GM23248 (cell line): ENCODE measurements at regions of chr3 and their contacts with region 1.

Region 1: GRCh38 chr3:74630602-74631001 is 16.1 kb upstream of the CNTN3 start:
- DNase-seq: peak; percentile 65
- H3K4me3 ChIP-seq: peak overlapping the region; percentile 47
- H3K27ac ChIP-seq: peak overlapping the region; percentile 69
- H3K4me1 ChIP-seq: peaks cover 39% of the 10 kb centered on the region
- H3K27me3 ChIP-seq: no peaks in the 10 kb centered on the region

Region 2: GRCh38 chr3:73868688-73869315 is 761.8 kb before region 1 on chr3:
- in situ Hi-C with region 1: loop called (anchors 25 kb)
- DNase-seq: peak; percentile 67
- H3K4me3 ChIP-seq: no peak overlapping the region
- H3K27ac ChIP-seq: no peak overlapping the region
- H3K4me1 ChIP-seq: peaks cover 12% of the 10 kb centered on the region
- H3K27me3 ChIP-seq: 0 out of 2 replicates have a peak, but pooled peaks cover 6% of the 10 kb centered on the region

Region 3: DNA sequence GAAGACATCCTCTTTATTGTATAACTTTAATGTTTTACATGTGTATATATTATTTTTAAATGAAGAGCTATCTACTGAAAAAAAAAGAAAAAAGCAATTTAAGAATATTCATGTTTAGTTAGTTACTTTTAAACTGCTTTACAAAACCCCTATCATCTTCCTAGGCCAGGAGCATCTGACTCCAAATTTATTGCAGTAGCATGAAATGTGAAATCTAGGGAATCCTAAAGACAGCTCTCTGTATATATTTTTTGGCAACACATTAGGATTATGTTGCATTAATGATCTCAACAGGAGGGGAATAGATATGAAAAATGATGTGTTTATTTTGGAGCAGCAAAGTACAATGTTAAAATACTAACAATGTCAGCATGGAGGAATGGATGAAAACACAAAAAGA is 174.4 kb before region 1 on chr3:
- in situ Hi-C with region 1: no loop called
- DNase-seq: no peak
- H3K4me3 ChIP-seq: no peak overlapping the region
- H3K27ac ChIP-seq: no peak overlapping the region
- H3K4me1 ChIP-seq: no peaks in the 10 kb centered on the region
- H3K27me3 ChIP-seq: no peaks in the 10 kb centered on the region